Head of caudate nucleus (tissue), 42 donors: ENCODE measurements at regions of chr3 and their contacts with region 1.

Region 1: GRCh38 chr3:28328188-28329151 is 20.1 kb upstream of the ZCWPW2 start:
- DNase-seq: no peak

Region 2: GRCh38 chr3:27712136-27713077 is 616.1 kb before region 1 on chr3:
- intact Hi-C with region 1: loop called (anchors 5 kb)
- DNase-seq: peak; percentile 61 to 89 (median 79)

Region 3: DNA sequence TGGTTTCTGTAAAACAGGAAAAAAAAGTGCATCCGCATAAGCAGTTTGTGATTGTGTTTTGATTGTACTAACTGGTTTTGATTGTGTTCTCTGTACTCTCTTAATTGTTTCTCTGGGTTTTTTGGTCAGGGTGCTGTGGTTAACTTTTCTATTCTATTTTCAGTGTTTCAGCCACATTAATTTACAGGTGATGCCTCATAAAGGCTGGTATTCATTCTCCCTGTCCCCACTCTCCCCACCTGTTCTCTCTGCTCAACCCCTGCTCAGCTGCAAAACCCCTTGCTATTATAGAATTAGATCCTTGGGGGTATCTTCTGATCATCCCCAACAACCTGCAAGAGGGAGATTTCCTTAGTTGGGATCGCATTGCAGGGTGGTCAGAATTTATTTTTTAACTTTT is 305.5 kb after region 1 on chr3:
- intact Hi-C with region 1: no loop called
- DNase-seq: no peak